Ovary (tissue), 10 donors: ENCODE measurements at regions of chr2 and their contacts with region 1.

Region 1: DNA sequence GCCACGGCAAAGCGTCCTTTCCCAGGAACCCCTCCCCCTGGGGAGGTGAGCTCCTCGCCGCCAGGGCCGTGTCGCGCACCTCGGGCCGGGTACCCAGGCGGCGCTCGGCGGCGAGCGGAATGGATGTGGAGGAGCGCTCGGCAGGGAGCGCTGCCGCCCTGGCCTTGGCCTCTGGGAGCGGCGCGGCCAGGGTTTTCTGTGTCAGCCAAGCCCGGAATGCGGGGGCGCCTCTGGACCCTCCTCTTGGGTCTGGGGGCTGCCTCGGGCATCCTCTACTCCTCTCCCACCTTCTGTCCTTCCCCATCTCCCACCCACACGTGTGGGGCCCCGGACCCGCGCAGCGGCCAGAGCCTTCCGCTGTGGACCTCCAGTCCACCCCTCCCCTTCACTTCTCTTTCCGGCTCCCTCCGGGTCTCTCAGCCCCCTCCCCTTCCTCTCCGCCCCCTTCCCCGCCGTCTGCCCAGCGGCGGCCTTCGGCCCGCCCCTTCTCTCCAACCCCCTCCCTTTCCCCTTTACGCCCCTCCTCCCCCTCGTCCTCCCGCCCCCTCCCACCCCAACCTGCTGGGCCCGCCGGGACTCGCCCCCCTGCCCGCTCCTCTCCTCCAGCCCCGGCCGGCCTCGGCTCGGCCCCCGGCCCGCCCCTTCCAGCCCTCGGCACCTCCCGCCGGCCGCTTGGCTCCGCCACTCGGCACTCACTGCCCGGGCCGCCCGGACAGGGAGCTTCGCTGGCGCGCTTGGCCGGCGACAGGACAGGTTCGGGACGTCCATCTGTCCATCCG is at the start of gene MERTK:
- DNase-seq: peak; percentile 87 to 90 (median 90)
- H3K4me3 ChIP-seq: peak within 1 kb of the TSS; percentile 94
- H3K27ac ChIP-seq: peak within 1 kb of the TSS; percentile 74 to 84
- H3K4me1 ChIP-seq: peaks cover 1% of the 10 kb centered on the region
- H3K27me3 ChIP-seq: no peaks in the 10 kb centered on the region
- CTCF ChIP-seq: peak; percentile 14 to 67 (median 58)
- EP300 ChIP-seq: no peak
- POLR2A ChIP-seq: peak; percentile 61
- total RNA-seq, gene MERTK: 11.0 to 20.7 (median 13.7) TPM

Region 2: DNA sequence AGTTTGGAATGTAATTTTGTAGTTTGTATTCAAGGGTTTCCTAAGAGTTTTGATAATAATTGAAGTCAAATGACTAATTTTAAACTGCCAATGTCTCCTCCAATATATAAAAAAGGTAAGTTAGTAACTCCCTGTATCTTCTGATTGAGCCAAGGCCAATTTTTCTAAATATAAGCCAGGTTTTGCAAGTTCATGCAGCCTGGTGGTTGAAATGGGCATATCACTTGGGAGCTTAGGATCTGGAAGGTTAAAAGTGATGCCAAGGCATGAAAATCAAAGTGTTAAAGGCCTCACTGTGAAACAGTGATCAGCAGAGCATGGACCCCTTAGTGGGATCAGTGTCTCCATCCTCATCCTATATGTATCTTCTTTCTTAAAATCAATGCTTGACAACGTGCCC is 60.8 kb after region 1 on chr2:
- intact Hi-C with region 1: loop called in 1 of 4 experiments (anchors 10 kb)
- DNase-seq: no peak
- H3K4me3 ChIP-seq: no peak overlapping the region
- H3K27ac ChIP-seq: no peak overlapping the region
- H3K4me1 ChIP-seq: peaks cover 2% of the 10 kb centered on the region
- H3K27me3 ChIP-seq: no peaks in the 10 kb centered on the region
- CTCF ChIP-seq: no peak
- EP300 ChIP-seq: no peak
- POLR2A ChIP-seq: no peak

Region 3: GRCh38 chr2:112032689-112033465 is 134.8 kb after region 1 on chr2:
- intact Hi-C with region 1: loop called in 2 of 4 experiments (anchors 5 kb)
- DNase-seq: peak in 4 of 5 donors; percentile 33 to 56 (median 43)
- H3K4me3 ChIP-seq: no peak overlapping the region
- H3K27ac ChIP-seq: peak overlapping the region in 1 of 2 donors; percentile 51
- H3K4me1 ChIP-seq: peaks cover 10% of the 10 kb centered on the region
- H3K27me3 ChIP-seq: no peaks in the 10 kb centered on the region
- CTCF ChIP-seq: no peak
- EP300 ChIP-seq: no peak
- POLR2A ChIP-seq: no peak

Region 4: DNA sequence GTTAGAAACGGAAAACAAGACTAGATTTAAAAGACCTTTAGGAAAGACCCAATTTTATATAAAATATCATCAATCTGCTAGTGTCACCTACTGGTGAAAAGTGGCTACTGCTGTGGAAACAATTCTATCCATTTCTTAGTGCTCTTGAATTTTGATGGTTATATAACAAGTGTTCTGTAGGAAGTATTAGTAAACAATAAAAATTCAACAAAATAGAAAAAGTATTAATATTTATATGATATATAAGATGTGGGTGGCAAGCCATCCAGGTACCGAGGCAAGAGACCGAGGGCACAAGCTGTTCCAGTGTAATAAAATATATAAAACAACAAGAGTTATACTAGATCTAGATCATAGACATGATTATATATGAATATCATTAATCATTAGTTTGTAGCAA is 150.8 kb after region 1 on chr2:
- intact Hi-C with region 1: loop called in 3 of 4 experiments (anchors 2 to 5 kb)
- DNase-seq: peak in 1 of 5 donors; percentile 45
- H3K4me3 ChIP-seq: no peak overlapping the region
- H3K27ac ChIP-seq: no peak overlapping the region
- H3K4me1 ChIP-seq: peaks cover 2% of the 10 kb centered on the region
- H3K27me3 ChIP-seq: no peaks in the 10 kb centered on the region
- CTCF ChIP-seq: peak; percentile 78 to 84 (median 80)
- EP300 ChIP-seq: no peak
- POLR2A ChIP-seq: no peak

Region 5: DNA sequence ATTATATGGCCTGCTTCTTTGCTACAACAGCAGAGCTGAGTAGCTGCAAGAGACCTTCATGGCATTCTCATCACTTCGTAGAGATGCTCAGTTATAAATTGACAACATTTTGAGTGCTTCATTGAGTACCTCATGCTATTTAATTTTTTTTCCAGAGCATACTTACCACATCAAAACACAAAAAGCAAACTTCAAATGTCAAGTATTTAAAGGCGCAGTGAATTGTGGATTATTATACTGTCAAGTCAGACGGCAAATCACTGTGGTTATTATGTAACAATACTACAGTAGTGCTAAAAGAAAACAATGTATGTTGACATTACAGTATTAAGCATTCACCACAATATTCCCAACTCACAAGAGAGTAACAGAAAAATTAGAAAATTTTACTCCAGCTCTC is 344.3 kb after region 1 on chr2:
- intact Hi-C with region 1: no loop called
- DNase-seq: no peak
- H3K4me3 ChIP-seq: no peak overlapping the region
- H3K27ac ChIP-seq: no peak overlapping the region
- H3K4me1 ChIP-seq: no peaks in the 10 kb centered on the region
- H3K27me3 ChIP-seq: no peaks in the 10 kb centered on the region
- CTCF ChIP-seq: no peak
- EP300 ChIP-seq: no peak
- POLR2A ChIP-seq: no peak

Region 6: DNA sequence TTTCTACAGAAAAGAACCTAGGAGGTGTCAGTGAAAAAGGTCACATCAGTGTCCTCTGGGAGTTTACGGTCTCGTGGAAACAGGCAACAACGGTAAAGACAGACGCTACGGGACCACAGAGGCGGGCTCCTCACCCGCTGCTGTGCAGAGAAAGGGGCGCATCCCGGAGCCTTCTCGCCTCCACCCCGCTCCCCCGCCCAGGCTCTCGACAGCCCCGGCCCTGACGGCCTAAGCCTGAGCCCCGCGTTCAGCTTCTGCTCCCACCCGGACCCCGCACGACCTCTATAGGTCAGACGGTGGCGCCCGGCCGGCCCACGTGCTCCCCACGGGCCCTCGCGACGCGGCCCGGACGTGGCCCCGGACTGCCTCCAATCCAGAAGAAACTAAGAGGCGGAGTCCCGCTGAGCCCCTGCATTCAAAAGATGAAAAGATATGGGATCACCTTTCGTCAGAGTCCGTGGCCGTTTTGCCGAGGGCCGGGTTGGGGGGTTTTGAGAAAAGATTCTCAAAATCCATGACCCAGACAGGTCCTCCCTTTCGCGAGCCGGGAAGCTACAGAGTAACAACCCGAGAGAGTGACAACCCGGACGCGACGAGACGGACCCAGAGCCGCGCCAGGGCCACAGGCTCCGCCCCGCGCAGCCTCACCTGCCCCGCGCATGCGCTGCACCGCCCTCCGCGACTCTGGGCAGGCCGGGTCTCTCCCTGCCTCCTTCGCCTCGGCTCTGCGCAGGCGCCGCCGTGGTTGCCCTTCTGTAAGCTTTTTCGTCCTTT is 356.5 kb after region 1 on chr2 and contains the start of gene ZC3H8:
- intact Hi-C with region 1: loop called in 1 of 4 experiments (anchors 10 kb)
- DNase-seq: peak; percentile 92 to 95 (median 92)
- H3K4me3 ChIP-seq: peak within 1 kb of the TSS; percentile 87
- H3K27ac ChIP-seq: peak within 1 kb of the TSS; percentile 18 to 54
- H3K4me1 ChIP-seq: peaks cover 1% of the 10 kb centered on the region
- H3K27me3 ChIP-seq: no peaks in the 10 kb centered on the region
- CTCF ChIP-seq: no peak
- EP300 ChIP-seq: no peak
- POLR2A ChIP-seq: peak; percentile 53
- total RNA-seq, gene ZC3H8: 4.9 to 36.2 (median 10.9) TPM